RWPE1 (cell line): ENCODE measurements at regions of chr17 and their contacts with region 1.

Region 1: GRCh38 chr17:51046514-51047384 is 73.9 kb downstream of the SPAG9 start:
- DNase-seq: no peak
- H3K27ac ChIP-seq: no peak overlapping the region
- CTCF ChIP-seq: no peak

Region 2: DNA sequence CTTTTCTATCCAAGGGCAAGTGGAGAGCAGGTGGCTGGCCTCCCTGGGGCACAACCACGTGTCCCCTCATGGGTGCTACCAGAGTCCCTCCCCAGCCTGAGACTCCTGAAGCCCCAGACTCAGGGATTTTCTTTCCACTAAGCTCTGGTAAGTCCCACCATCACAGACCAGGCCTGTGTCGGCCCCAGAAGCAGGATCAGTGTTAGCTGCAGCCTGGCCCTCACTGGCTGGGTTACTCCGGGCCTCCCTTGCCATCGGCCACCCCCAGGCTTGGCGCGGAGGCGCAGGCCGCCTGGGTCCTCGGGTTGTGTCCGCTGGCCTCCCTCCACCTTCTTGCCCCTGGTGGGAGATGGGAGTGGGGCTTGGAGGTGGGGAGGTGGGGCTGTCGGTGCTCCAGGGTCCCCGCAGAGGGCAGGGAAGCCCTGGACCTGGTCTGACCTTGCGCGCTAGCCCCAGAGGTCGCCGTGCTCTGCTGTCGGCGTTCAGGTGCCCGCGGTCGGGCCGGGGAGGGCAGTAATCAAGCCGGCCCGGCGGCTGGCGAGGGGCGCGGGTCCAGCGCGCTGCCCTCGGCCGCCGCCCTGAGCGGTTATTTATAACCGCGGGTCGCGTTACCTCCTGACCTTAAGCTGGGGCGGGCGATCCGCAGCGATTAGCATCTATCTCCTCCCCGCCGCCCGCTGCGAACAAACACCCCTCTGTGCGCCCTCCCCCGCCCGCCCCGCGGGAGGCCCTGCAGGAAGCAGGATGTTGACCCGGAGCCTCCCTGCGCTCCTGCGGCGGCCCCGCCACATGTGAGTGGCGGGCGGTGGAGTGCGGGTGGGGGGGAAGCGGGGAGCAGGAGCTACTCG is 102.5 kb before region 1 on chr17:
- CTCF ChIA-PET with region 1: no interaction called
- POLR2A ChIA-PET with region 1: no interaction called
- DNase-seq: peak; percentile 24
- H3K27ac ChIP-seq: peak overlapping the region; percentile 37
- CTCF ChIP-seq: no peak

Region 3: GRCh38 chr17:51028176-51028863 is 18.4 kb before region 1 on chr17:
- CTCF ChIA-PET with region 1: no interaction called
- POLR2A ChIA-PET with region 1: no interaction called
- DNase-seq: no peak
- H3K27ac ChIP-seq: no peak overlapping the region
- CTCF ChIP-seq: no peak

Region 4: GRCh38 chr17:51056813-51057510 is 10.2 kb after region 1 on chr17:
- CTCF ChIA-PET with region 1: interaction called, 13 read pairs
- POLR2A ChIA-PET with region 1: no interaction called
- DNase-seq: peak; percentile 44
- H3K27ac ChIP-seq: peak overlapping the region; percentile 54; the same call in 1 of the 2 replicates
- CTCF ChIP-seq: peak; percentile 78

Region 5: DNA sequence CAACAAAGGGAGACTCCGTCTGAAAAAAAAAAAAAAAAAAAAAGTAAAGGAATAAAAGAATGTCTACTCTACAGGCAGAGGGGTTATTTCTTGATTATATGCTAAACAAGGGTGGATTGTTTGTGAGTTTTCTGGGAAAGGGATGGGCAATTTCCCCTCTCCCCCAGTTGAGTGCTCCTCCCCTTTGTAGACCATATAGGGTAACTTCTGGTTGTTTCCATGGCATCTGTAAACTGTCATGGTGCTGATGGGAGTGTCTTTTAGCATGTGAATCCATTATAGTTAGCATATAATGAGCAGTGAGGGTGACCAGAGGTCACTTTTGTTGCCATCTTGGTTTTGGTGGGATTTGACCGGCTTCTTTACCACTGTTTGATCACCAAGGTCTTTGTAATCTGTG is 102.4 kb after region 1 on chr17:
- CTCF ChIA-PET with region 1: no interaction called
- POLR2A ChIA-PET with region 1: no interaction called
- DNase-seq: no peak
- H3K27ac ChIP-seq: no peak overlapping the region
- CTCF ChIP-seq: no peak